Activated CD8-positive, alpha-beta T cell treated with anti-CD3 and anti-CD28 coated beads for 36 hours (primary cell): ENCODE measurements at regions of chr5 and their contacts with region 1.

Region 1: DNA sequence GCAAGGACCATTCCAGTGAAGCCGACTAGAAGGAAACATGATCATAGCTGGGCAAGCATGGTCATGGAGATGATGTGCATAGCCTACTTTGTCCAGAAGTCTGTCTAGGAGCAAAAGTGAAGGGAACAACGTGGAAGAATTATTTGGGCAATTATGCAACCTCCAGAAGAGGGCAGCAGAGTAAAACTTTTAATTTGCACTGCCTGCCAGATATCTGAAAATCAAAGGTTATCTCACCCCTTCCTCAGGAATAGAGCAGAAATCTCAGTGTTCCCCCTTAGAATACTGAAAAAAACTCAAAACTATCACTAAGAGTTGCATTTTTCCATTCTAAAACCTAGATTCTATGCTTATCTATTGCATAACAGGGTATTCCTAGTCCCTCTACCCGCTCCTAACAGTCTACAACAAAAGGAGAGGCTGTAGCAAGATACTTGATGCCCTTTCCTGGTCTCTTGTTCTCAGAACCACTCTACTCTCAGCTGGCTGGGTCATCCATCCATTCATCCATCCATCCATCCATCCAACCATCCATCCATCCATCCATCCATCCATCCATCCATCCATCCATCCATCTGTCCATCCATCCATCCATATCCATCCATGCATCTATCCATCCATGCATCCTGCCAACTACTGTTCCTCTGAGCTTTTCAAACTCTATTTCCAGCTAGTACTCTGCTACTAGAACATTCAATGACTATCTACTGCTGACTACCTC is 8.4 kb upstream of the SETD9 start:
- DNase-seq: peak; percentile 35
- ATAC-seq: peak; percentile 61
- H3K4me3 Mint-ChIP-seq: no peak overlapping the region
- H3K27ac Mint-ChIP-seq: no peak overlapping the region
- H3K4me1 Mint-ChIP-seq: peaks cover 4% of the 10 kb centered on the region
- H3K27me3 Mint-ChIP-seq: no peaks in the 10 kb centered on the region
- CTCF ChIP-seq: peak; percentile 82

Region 2: GRCh38 chr5:57221049-57221568 is 320.1 kb after region 1 on chr5:
- CTCF ChIA-PET with region 1: interaction called, 10 read pairs
- POLR2A ChIA-PET with region 1: no interaction called
- intact Hi-C with region 1: loop called (anchors 2 kb)
- DNase-seq: no peak
- ATAC-seq: peak; percentile 79
- H3K4me3 Mint-ChIP-seq: no peak overlapping the region
- H3K27ac Mint-ChIP-seq: peak overlapping the region; percentile 67
- H3K4me1 Mint-ChIP-seq: peaks cover 49% of the 10 kb centered on the region
- H3K27me3 Mint-ChIP-seq: no peaks in the 10 kb centered on the region
- CTCF ChIP-seq: peak; percentile 96